CD8-positive, alpha-beta T cell (primary cell): ENCODE measurements at regions of chr2 and their contacts with region 1.

Region 1: GRCh38 chr2:38370664-38371063 is 6.4 kb downstream of the ATL2 start:
- DNase-seq: peak in 1 of 9 experiments; percentile 13
- ATAC-seq: no peak
- H3K4me3 ChIP-seq: no peak overlapping the region
- H3K4me3 Mint-ChIP-seq: no peak overlapping the region
- H3K27ac ChIP-seq: no peak overlapping the region
- H3K27ac Mint-ChIP-seq: no peak overlapping the region
- H3K4me1 ChIP-seq: peaks cover 9% of the 10 kb centered on the region
- H3K4me1 Mint-ChIP-seq: peaks cover 59% of the 10 kb centered on the region
- H3K27me3 ChIP-seq: no peaks in the 10 kb centered on the region
- H3K27me3 Mint-ChIP-seq: no peaks in the 10 kb centered on the region
- CTCF ChIP-seq: no peak

Region 2: GRCh38 chr2:38409156-38410122 is 38.8 kb after region 1 on chr2:
- CTCF ChIA-PET with region 1: interaction called, 3 read pairs
- POLR2A ChIA-PET with region 1: no interaction called
- intact Hi-C with region 1: loop called in 1 of 2 experiments (anchors 5 kb)
- DNase-seq: no peak
- ATAC-seq: no peak
- H3K4me3 ChIP-seq: no peak overlapping the region
- H3K4me3 Mint-ChIP-seq: no peak overlapping the region
- H3K27ac ChIP-seq: no peak overlapping the region
- H3K27ac Mint-ChIP-seq: no peak overlapping the region
- H3K4me1 ChIP-seq: no peaks in the 10 kb centered on the region
- H3K4me1 Mint-ChIP-seq: no peaks in the 10 kb centered on the region
- H3K27me3 ChIP-seq: no peaks in the 10 kb centered on the region
- H3K27me3 Mint-ChIP-seq: peaks cover 2% of the 10 kb centered on the region
- CTCF ChIP-seq: no peak